Activated T-helper 1 cell treated with anti-CD3 and anti-CD28 coated beads, Interleukin-12 subunit alpha, Interleukin-12 subunit beta, Interleukin-2, Interleukin-4 antibody, amounts not matched to agents 30 ng/mL and 10 ng/mL and 1 ng/mL, durations not matched to agents 14 hours and 24 hours and 36 hours (primary cell): ENCODE measurements at regions of chr1 and their contacts with region 1.

Region 1: GRCh38 chr1:156659994-156660751 is 17.0 kb downstream of the NES start:
- DNase-seq: peak; percentile 88
- H3K4me3 Mint-ChIP-seq: peak overlapping the region; percentile 86
- H3K27ac Mint-ChIP-seq: peak overlapping the region; percentile 89
- H3K4me1 Mint-ChIP-seq: peaks cover 51% of the 10 kb centered on the region
- H3K27me3 Mint-ChIP-seq: peaks cover 25% of the 10 kb centered on the region

Region 2: DNA sequence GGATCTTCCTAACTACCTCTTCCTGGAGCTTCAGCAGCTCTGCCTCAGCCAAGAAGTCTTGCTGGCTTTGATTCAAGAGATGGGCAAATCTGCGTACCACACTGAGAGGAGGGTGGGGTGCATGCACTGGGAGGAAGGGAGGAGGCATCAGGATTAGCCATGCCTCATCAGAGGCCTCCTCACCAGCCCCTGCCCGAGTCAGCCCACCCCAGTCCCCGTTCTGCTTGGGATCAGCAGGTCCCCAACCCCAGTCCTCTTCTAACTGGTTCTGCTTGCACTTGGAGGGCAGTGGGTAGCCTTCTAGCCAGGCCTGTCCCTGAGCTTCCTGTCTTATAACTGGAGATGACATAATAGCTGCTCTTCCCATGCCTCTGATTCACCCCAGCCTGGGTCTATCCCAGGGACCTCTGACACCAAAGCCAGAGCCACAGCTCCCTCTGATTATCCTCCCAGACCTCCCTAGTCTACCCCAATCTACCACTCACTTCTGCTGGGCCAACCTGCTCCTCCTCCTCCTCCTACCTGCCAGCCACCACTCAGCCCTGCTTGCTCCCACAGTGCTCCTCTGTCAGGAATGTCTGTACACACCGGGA is 119.3 kb before region 1 on chr1:
- intact Hi-C with region 1: no loop called
- DNase-seq: no peak
- H3K4me3 Mint-ChIP-seq: no peak overlapping the region
- H3K27ac Mint-ChIP-seq: peak overlapping the region; percentile 13
- H3K4me1 Mint-ChIP-seq: peaks cover 11% of the 10 kb centered on the region
- H3K27me3 Mint-ChIP-seq: no peaks in the 10 kb centered on the region

Region 3: DNA sequence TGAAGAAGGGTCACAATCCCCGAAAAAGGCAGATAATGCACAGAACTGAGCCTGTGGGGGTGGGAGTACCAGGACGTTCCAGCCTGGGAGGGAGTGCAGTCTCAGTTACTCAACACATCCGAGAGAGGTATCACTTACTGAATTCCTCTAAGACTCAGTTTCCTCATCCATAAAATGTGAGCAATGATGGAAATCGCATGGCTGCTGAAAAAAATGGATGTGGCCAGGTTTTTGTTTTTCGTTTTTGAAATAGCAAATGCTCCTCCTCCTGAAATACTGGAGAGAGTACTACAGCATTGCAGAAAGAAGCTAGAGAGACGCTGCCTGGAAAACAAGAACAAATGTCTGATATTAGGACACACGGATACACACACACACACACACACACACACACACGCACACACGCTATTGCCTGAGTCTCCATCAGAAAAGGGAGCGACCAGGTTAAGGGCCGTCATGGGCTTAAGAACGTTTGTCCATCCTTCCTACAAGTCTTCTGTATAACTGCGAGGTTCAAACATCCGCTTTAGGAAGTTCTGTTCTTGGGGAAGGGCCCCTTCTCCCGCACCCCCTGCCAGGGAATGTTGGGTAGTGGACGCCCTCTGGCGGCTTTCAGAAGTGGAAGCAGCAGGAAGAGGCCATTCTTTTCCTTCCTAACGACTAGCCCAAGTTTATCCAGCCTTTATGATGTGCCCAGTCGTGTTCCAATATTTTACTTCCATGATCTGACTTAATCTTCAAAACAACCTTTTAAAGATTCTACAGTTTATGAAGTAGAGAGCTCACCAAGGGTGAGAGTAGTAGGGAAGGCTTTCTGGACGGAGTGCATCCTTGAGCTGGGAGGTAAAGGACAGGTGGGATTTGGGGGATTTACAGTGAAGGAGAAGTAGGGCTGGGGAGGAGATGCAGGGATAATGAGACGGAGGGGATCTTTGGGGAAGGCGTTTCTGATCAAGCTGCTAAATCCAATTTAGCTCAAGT is 17.7 kb after region 1 on chr1:
- intact Hi-C with region 1: loop called (anchors 1 kb)
- DNase-seq: no peak
- H3K4me3 Mint-ChIP-seq: no peak overlapping the region
- H3K27ac Mint-ChIP-seq: no peak overlapping the region
- H3K4me1 Mint-ChIP-seq: peaks cover 14% of the 10 kb centered on the region
- H3K27me3 Mint-ChIP-seq: peaks cover 63% of the 10 kb centered on the region

Region 4: DNA sequence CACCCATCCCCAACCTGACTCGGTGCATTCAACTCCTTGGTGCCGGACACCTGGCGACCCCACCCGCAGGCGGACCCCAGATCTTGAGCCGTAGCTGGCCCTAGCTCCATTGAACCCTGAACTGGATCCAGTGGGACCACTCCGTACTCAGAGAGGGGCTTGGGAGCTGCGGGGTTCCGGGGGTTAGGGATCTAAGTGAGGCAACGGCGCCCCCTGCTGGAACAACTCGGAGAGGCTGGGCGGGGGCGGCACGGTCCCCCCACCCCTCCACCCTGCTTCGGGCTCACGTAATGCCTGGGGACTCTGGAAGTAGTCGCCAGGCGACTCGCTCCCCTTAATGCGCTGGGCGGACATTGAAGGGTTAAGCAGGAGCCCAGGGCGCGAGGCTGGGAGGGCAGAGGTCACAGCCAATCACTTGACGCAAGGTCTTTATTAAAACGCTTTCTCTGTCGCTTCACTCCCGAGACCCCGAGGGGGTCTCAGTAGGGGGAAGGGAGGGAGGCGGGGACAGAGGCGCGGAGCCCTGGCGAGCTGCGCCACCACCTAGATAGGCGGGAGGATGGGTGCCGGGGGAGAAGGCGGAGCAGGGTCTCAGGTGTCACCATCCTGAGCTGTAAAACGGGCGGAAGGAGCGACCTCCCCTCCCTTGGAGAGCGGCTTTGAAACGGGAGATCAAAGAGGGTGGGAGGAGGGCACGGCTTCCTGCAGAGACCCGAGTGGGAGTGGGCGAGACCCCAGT is 45.9 kb after region 1 on chr1:
- intact Hi-C with region 1: loop called (anchors 1 kb)
- DNase-seq: peak; percentile 47
- H3K4me3 Mint-ChIP-seq: peak overlapping the region; percentile 85
- H3K27ac Mint-ChIP-seq: peak overlapping the region; percentile 29
- H3K4me1 Mint-ChIP-seq: peaks cover 24% of the 10 kb centered on the region
- H3K27me3 Mint-ChIP-seq: peaks cover 43% of the 10 kb centered on the region